Endothelial cell of umbilical vein (primary cell): ENCODE measurements at regions of chr16 and their contacts with region 1.

Region 1: DNA sequence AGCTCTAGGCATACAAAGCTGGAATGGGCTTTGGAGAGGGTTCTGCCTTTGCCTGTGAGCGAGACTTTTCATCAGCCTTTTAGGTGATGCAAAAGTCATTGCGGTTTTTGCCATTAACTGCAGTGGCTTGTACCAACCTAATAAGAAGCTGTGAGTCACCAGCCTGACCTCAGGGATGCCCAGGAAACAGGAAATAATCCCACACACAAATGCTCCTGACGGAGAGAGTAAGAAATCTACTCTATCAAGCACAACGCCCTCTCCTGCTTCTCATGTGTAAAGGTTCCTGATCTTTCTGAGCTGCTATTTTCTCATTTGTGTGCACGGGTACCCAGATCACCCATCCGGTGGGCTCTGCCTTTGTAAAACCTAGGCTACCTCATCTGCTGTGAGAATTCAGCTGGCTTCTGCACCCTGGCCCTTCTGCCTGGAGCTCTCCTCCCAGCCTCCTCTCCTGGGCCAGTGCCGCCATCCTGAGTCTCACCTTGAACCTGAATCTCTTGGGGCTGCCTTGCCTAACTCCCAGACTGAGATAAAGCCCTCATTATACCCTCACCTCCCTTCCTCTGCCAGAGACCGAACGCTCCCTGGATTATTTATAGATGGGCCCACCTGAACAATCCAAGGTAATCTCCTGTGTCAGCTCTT is 299.7 kb downstream of the C16orf95 start:
- DNase-seq: peak; percentile 88
- H3K4me3 ChIP-seq: peak overlapping the region in 1 of 3 experiments; percentile 8
- H3K27ac ChIP-seq: peak overlapping the region; percentile 21
- H3K4me1 ChIP-seq: peaks cover 15% of the 10 kb centered on the region
- H3K27me3 ChIP-seq: no peaks in the 10 kb centered on the region
- CTCF ChIP-seq: peak; percentile 50 to 52
- POLR2A ChIP-seq: no peak

Region 2: GRCh38 chr16:86680162-86680561 is 337.3 kb before region 1 on chr16:
- CTCF ChIA-PET with region 1: interaction called, 4 read pairs
- POLR2A ChIA-PET with region 1: no interaction called
- dilution Hi-C with region 1: no loop called
- intact Hi-C with region 1: loop called (anchors 1 kb)
- DNase-seq: peak; percentile 96
- H3K4me3 ChIP-seq: peak overlapping the region in 1 of 3 experiments; percentile 37
- H3K27ac ChIP-seq: peak overlapping the region; percentile 99
- H3K4me1 ChIP-seq: peaks cover 42% of the 10 kb centered on the region
- H3K27me3 ChIP-seq: no peaks in the 10 kb centered on the region
- CTCF ChIP-seq: no peak
- POLR2A ChIP-seq: peak; percentile 51

Region 3: DNA sequence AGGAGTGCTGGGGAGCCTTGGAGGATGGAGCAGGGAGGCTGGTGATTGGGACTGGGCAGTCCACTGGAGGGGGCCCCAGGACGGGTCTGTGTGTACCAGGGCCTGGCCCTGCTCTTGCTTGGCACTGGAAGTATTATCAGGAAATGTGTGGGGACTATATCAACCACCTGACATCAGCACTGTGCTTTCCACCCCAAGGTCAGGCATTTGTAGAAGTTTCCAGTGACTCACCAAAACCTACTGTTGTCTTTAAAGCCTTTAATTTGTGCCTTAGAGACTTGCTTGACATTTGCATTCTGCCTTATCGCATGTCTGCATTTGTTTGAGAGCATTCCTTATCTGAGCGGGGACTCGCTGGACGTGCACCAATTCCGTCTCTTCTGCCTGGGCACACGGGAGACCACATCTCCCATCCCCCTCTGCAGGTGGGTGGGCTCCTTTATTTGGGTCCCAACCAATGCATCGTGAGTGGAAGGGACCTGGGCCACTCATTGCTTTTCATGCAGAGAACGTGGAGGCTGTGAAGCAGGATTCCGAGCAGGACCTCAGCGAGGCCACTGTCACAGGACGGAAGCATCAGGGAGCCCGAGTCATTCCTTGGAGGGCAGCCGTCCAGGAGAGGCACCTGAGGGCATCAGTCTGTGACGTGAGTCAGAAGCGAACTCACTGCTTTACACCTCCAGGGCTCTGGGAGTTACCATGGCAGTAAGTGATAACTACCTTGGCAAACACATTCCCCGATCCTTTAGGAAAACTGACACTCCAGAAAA is 115.8 kb before region 1 on chr16:
- CTCF ChIA-PET with region 1: interaction called, 11 read pairs
- POLR2A ChIA-PET with region 1: no interaction called
- dilution Hi-C with region 1: no loop called
- intact Hi-C with region 1: loop called (anchors 1 kb)
- DNase-seq: peak; percentile 94
- H3K4me3 ChIP-seq: no peak overlapping the region
- H3K27ac ChIP-seq: peak overlapping the region; percentile 53
- H3K4me1 ChIP-seq: peaks cover 24% of the 10 kb centered on the region
- H3K27me3 ChIP-seq: no peaks in the 10 kb centered on the region
- CTCF ChIP-seq: peak in 1 of 2 donors; percentile 49
- POLR2A ChIP-seq: no peak

Region 4: DNA sequence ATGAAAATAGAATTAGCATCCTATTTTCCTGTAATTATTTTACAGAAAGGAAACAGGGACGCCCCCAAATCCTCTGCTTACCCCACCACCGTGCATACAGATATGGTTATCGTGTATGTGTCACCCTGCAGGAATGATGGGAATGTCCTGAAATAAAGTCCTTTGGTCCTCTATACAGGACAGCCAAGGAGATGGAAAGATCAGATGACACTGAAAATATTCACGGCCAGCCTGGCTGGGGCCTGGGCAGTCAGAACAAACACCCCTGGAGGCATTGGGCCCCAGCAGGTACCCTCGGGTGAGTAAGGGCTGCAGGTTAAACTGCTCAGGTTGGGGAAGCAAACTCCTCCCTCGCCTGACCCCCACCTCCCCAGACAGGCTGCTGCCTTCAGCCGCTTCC is 71.1 kb before region 1 on chr16:
- CTCF ChIA-PET with region 1: interaction called, 6 read pairs
- POLR2A ChIA-PET with region 1: no interaction called
- dilution Hi-C with region 1: no loop called
- intact Hi-C with region 1: loop called (anchors 2 kb)
- DNase-seq: peak; percentile 49
- H3K4me3 ChIP-seq: peak overlapping the region in 1 of 3 experiments; percentile 35
- H3K27ac ChIP-seq: peak overlapping the region; percentile 61
- H3K4me1 ChIP-seq: peaks cover 28% of the 10 kb centered on the region
- H3K27me3 ChIP-seq: no peaks in the 10 kb centered on the region
- CTCF ChIP-seq: no peak
- POLR2A ChIP-seq: no peak

Region 5: DNA sequence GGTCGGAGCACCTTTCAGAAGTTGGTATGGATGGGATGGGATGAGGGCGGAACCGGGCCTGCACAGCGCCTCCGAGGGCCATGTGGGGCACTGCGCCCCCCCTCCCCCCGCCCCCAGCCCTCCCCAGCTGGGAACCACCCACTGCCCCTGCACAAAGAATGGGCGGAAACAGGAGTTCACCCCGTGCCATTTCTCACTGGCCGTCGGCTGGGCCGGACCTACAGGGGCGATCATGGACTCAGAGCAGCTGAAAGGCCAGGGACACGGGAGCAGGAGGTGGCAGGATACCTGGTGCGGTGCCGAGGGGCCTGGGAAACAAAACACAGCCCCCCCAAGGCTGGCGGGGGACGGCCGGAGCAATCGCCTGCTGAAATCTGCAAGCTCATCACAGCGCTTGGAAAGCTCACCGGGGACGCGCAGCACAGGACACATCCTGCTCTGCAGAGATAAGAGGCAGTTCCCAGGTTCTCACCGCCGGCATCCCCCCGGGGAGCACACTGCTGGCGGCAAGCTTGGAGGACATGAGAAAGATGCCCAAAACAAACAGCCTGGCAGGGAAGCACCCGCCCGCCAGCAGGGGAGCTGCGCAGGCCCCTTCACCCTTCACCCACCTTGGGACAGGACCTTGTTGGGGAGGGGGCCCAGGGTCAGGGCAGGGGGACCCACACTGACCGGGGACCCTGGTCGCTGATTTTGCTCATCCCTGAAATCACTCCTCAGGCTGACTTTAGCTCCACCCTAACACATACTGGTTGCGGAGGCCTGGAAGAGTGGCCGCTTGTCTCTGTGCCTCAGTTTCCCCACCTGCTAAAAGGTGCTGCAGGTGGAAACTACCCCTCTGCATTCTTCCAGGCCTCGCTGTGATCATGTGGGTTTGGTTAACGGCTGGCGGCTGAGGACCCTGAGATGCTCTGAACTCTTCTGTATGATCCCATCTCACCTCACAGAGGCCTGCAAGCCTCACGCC is 35.8 kb after region 1 on chr16:
- CTCF ChIA-PET with region 1: interaction called, 12 read pairs
- POLR2A ChIA-PET with region 1: no interaction called
- dilution Hi-C with region 1: no loop called
- intact Hi-C with region 1: no loop called
- DNase-seq: peak; percentile 89
- H3K4me3 ChIP-seq: peak overlapping the region in 1 of 3 experiments; percentile 8
- H3K27ac ChIP-seq: peak overlapping the region; percentile 25
- H3K4me1 ChIP-seq: peaks cover 16% of the 10 kb centered on the region
- H3K27me3 ChIP-seq: peaks cover 0 to 2% of the 10 kb centered on the region in 2 experiments
- CTCF ChIP-seq: peak; percentile 29 to 70
- POLR2A ChIP-seq: no peak

Region 6: DNA sequence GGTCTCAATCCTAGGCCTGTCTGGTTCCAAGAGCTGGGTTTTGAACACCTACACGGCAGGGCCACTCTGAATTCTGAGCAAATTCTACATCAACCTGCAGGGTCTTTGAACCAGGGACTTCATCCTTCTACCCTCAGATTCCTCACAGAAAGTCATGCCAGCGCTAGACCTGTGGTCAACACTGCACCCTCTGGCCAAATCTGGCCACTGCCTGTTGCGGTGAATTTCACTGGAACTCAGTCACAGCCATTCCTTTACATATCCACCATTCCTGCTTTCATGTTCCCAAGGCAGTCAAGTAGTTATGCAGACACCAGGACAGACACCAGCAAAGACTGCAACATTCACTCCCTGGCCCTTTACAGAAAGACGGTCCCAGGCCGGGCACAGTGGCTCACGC is 155.1 kb after region 1 on chr16:
- CTCF ChIA-PET with region 1: no interaction called
- POLR2A ChIA-PET with region 1: no interaction called
- dilution Hi-C with region 1: no loop called
- intact Hi-C with region 1: no loop called
- DNase-seq: no peak
- H3K4me3 ChIP-seq: no peak overlapping the region
- H3K27ac ChIP-seq: no peak overlapping the region
- H3K4me1 ChIP-seq: peaks cover 10% of the 10 kb centered on the region
- H3K27me3 ChIP-seq: peaks cover 0 to 1% of the 10 kb centered on the region in 2 experiments
- CTCF ChIP-seq: peak; percentile 11 to 16
- POLR2A ChIP-seq: no peak

Region 7: DNA sequence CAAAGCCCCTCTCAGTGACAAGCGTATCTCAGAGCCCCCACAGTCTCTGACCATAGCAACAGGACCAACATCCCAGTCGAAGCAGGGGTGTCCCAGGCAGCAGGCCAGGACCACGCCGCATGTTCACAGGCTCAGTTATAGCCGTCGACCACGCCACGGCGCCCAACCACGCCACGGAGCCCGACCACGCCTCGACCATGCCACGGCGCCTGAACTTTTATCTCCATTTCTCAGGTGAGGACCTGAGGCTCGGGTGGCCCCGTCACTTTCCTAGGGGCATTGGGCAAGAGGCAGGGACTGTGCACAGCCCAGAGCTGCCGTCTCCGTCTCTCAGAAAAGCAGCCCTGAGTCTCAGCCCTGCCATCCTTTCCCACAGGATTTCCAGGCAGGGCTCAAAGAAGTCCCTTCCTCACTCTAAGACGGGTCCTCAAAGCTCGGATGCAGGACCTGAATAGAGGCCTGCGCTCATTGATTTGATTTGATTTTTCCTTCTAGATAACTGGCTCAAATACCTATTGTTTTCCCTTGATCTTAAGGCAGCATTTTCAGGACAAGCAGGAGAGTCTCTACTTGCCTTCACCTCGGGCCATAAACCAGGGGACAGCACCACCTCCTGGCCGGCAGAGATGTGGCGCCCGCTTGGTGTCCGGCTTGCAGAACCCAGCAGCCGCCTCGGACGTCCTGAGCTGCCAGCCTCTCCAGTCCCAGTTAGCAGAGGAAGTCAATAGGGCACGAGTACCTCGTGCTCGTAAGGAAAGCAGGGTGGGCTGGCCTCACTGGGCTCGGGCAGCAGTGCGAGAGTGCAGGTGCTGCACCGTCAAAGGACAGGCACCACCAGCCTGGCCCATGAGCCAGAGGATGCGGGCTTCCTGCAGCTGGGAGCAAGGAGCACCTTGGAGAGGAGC is 261.0 kb after region 1 on chr16:
- CTCF ChIA-PET with region 1: interaction called, 11 read pairs
- POLR2A ChIA-PET with region 1: no interaction called
- dilution Hi-C with region 1: no loop called
- intact Hi-C with region 1: no loop called
- DNase-seq: peak; percentile 86
- H3K4me3 ChIP-seq: no peak overlapping the region
- H3K27ac ChIP-seq: no peak overlapping the region
- H3K4me1 ChIP-seq: peaks cover 4% of the 10 kb centered on the region
- H3K27me3 ChIP-seq: no peaks in the 10 kb centered on the region
- CTCF ChIP-seq: peak; percentile 92 to 94
- POLR2A ChIP-seq: no peak